MCF 10A (cell line): ENCODE measurements at regions of chr2 and their contacts with region 1.

Region 1: GRCh38 chr2:74391580-74392448 is 11.7 kb upstream of the DCTN1 start:
- DNase-seq: peak; percentile 94
- H3K4me3 Mint-ChIP-seq: peak overlapping the region; percentile 79
- H3K27ac Mint-ChIP-seq: peak overlapping the region; percentile 91
- H3K4me1 Mint-ChIP-seq: no peaks in the 10 kb centered on the region
- H3K27me3 Mint-ChIP-seq: no peaks in the 10 kb centered on the region
- CTCF ChIP-seq: peak; percentile 91

Region 2: DNA sequence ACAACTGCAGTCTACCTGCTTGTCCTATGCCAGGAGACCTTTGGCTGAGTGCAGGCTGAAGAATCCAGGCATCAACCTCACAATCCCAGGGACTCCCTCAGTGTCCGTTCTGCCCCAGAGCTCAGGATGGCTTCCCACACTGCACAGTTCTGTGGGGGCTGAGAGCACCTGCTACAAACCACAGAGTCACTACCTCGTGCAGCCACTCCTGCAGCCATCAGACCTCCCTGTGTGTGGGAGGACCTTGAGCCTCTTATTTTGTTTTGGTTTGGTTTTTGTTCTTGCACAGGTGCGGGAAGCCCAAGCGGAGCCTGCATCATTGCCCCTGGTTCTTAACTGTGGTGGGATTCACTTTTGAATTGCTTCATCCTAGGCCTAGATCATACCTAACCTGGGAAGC is 780.6 kb before region 1 on chr2:
- CTCF ChIA-PET with region 1: no interaction called
- POLR2A ChIA-PET with region 1: no interaction called
- intact Hi-C with region 1: no loop called
- DNase-seq: no peak
- H3K4me3 Mint-ChIP-seq: no peak overlapping the region
- H3K27ac Mint-ChIP-seq: no peak overlapping the region
- H3K4me1 Mint-ChIP-seq: no peaks in the 10 kb centered on the region
- H3K27me3 Mint-ChIP-seq: no peaks in the 10 kb centered on the region
- CTCF ChIP-seq: no peak

Region 3: GRCh38 chr2:74250189-74250631 is 141.6 kb before region 1 on chr2:
- CTCF ChIA-PET with region 1: interaction called, 7 read pairs
- POLR2A ChIA-PET with region 1: no interaction called
- intact Hi-C with region 1: loop called (anchors 2 kb)
- DNase-seq: peak; percentile 49
- H3K4me3 Mint-ChIP-seq: no peak overlapping the region
- H3K27ac Mint-ChIP-seq: no peak overlapping the region
- H3K4me1 Mint-ChIP-seq: peaks cover 5% of the 10 kb centered on the region
- H3K27me3 Mint-ChIP-seq: peaks cover 11% of the 10 kb centered on the region
- CTCF ChIP-seq: peak; percentile 70

Region 4: DNA sequence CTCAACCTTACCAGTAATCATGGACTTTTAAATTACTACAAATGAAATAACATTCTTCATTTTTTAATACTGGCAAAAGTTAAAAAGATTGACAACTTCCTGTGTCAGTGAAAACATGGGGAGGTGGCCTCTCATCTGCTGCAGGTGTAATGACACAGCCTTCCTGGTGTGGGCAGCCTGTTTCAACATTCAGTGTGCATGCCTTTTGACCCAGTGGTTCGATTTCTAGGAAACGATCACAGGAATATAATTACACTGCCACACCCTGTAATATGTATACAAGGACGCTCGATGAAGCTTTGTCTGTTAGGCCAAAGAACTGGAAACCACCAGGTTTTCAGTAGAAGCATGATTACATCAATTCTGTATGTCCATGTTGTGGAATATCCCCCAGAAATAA is 124.7 kb before region 1 on chr2:
- CTCF ChIA-PET with region 1: no interaction called
- POLR2A ChIA-PET with region 1: no interaction called
- intact Hi-C with region 1: loop called (anchors 5 kb)
- DNase-seq: peak; percentile 63
- H3K4me3 Mint-ChIP-seq: no peak overlapping the region
- H3K27ac Mint-ChIP-seq: no peak overlapping the region
- H3K4me1 Mint-ChIP-seq: no peaks in the 10 kb centered on the region
- H3K27me3 Mint-ChIP-seq: no peaks in the 10 kb centered on the region
- CTCF ChIP-seq: peak; percentile 40

Region 5: GRCh38 chr2:74379851-74380789 is 11.7 kb before region 1 on chr2 and contains the start of gene DCTN1:
- CTCF ChIA-PET with region 1: interaction called, 12 read pairs
- POLR2A ChIA-PET with region 1: interaction called, 6 read pairs
- intact Hi-C with region 1: no loop called
- DNase-seq: peak; percentile 52
- H3K4me3 Mint-ChIP-seq: peak within 1 kb of the TSS; percentile 43
- H3K27ac Mint-ChIP-seq: no peak within 1 kb of the TSS
- H3K4me1 Mint-ChIP-seq: peaks cover 34% of the 10 kb centered on the region
- H3K27me3 Mint-ChIP-seq: no peaks in the 10 kb centered on the region
- CTCF ChIP-seq: no peak
- total RNA-seq, gene DCTN1: 113 and 117 TPM in 2 replicates

Region 6: GRCh38 chr2:74414881-74415761 is 23.3 kb after region 1 on chr2:
- CTCF ChIA-PET with region 1: interaction called, 12 read pairs
- POLR2A ChIA-PET with region 1: no interaction called
- intact Hi-C with region 1: no loop called
- DNase-seq: no peak
- H3K4me3 Mint-ChIP-seq: no peak overlapping the region
- H3K27ac Mint-ChIP-seq: no peak overlapping the region
- H3K4me1 Mint-ChIP-seq: peaks cover under 1% of the 10 kb centered on the region
- H3K27me3 Mint-ChIP-seq: no peaks in the 10 kb centered on the region
- CTCF ChIP-seq: no peak

Region 7: DNA sequence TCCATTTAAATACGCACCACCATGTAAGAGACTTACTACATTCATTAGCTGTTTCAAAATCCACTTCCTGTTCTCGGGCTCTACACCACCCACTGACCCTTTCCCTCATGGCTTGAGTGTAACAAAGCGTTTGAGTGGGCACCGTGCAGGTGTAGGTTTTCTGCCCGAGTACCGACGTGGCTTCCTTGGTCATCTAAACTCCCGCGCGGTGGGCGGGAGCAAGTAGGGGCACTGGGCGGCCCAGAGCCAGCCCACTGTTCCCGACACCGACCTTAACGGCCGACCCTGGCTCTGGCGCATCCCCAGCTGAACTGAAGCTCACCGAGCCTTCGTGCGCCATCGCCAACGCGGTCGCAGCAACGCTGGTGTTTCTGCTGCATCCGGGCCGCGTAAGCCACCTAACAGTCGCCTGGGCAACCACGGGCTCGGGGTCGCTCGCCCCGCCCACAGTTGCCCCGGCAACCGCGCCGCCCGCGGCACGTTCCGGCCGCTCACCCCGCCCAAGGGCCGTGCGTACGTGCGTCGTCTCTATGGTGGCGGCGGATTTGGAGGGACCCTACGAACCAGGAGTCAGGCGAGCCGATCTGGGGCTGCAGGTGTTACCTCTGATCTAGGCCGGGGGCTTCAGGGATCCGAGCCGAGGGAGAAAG is 29.5 kb after region 1 on chr2 and contains the starts of genes C2orf81 and WDR54:
- CTCF ChIA-PET with region 1: interaction called, 3 read pairs
- POLR2A ChIA-PET with region 1: interaction called, 13 read pairs
- intact Hi-C with region 1: no loop called
- DNase-seq: peak; percentile 78
- H3K4me3 Mint-ChIP-seq: peak within 1 kb of the TSS; percentile 87
- H3K27ac Mint-ChIP-seq: peak within 1 kb of the TSS; percentile 82
- H3K4me1 Mint-ChIP-seq: peaks cover 33% of the 10 kb centered on the region
- H3K27me3 Mint-ChIP-seq: no peaks in the 10 kb centered on the region
- CTCF ChIP-seq: no peak
- total RNA-seq, gene C2orf81: 4.3 and 5.6 TPM in 2 replicates
- total RNA-seq, gene WDR54: 16.4 and 19.9 TPM in 2 replicates

Region 8: GRCh38 chr2:74440378-74441169 is 48.8 kb after region 1 on chr2:
- CTCF ChIA-PET with region 1: interaction called, 4 read pairs
- POLR2A ChIA-PET with region 1: interaction called, 18 read pairs
- intact Hi-C with region 1: no loop called
- DNase-seq: peak; percentile 82
- H3K4me3 Mint-ChIP-seq: peak overlapping the region; percentile 78
- H3K27ac Mint-ChIP-seq: peak overlapping the region; percentile 80
- H3K4me1 Mint-ChIP-seq: peaks cover 15% of the 10 kb centered on the region
- H3K27me3 Mint-ChIP-seq: no peaks in the 10 kb centered on the region
- CTCF ChIP-seq: no peak